Dorsolateral prefrontal cortex (tissue), 120 donors: ENCODE measurements at regions of chr2 and their contacts with region 1.

Region 1: GRCh38 chr2:218995972-218996711 is 2.9 kb upstream of the CRYBA2 start:
- DNase-seq: peak; percentile 75 to 89 (median 84)
- H3K4me3 ChIP-seq: peak overlapping the region; percentile 31 to 73 (median 54)
- H3K27ac ChIP-seq: peak overlapping the region in 14 of 59 donors; percentile 14 to 85 (median 54)
- H3K27me3 ChIP-seq: peaks cover 0 to 74% (median 44%) of the 10 kb centered on the region in 45 donors
- CTCF ChIP-seq: peak; percentile 57 to 97 (median 92)

Region 2: DNA sequence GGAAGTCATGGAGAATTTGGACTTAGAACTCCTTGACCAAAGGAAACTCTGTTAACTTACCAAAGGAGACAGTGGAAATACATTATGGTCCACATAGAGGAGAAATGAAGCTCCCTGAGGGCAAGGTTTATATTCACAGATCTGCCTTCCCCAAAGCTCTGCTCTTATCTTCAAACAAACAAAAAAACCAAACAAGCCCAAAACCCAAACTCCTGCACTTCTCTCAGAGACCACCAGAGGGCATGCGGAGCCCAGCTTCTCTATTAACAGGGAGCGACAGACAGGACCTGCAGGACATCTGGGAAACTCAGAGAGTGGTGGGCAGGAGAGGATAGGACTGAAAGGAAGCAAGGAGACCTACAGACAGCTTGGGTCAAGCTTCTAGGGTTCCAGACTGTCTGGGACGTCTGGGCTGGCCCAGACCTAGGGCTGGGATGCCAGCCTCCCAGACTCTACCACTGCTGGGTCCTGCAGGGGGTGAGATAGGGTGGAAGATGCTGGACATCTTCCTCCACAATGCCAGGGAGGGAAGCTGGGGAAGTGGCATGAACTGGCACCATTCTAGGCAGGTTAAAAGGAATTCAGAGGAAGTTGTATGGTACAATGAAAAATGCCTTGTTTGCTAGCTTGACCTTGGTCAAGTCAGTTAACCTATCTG is 119.5 kb before region 1 on chr2:
- intact Hi-C with region 1: loop called in 1 of 2 experiments (anchors 5 kb)
- DNase-seq: peak in 9 of 10 donors; percentile 51 to 85 (median 69)
- H3K4me3 ChIP-seq: no peak overlapping the region
- H3K27ac ChIP-seq: no peak overlapping the region
- H3K27me3 ChIP-seq: peaks cover 0 to 89% (median 61%) of the 10 kb centered on the region in 45 donors
- CTCF ChIP-seq: peak; percentile 83 to 99 (median 94)

Region 3: DNA sequence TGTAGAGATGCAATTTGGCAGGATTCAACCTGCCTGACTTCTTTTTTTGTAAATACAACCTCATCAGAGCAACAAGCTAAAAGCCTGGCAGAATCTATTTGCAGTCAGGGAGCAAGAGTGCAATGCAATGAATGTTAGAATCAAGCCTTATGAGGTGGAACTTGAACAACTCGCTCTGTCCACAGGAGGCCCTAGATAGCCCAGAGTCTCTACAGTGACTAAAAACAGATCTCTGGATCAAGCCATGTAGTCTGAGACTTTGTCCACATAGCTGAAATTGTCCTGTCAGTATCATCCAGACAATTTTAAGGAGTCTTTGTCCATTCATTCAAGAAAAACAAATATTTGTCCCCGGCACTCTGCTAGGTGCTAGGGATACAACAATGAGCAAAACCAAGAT is 68.7 kb before region 1 on chr2:
- intact Hi-C with region 1: no loop called
- DNase-seq: no peak
- H3K4me3 ChIP-seq: no peak overlapping the region
- H3K27ac ChIP-seq: no peak overlapping the region
- H3K27me3 ChIP-seq: peaks cover 0 to 16% (median 0%) of the 10 kb centered on the region in 45 donors
- CTCF ChIP-seq: no peak

Region 4: DNA sequence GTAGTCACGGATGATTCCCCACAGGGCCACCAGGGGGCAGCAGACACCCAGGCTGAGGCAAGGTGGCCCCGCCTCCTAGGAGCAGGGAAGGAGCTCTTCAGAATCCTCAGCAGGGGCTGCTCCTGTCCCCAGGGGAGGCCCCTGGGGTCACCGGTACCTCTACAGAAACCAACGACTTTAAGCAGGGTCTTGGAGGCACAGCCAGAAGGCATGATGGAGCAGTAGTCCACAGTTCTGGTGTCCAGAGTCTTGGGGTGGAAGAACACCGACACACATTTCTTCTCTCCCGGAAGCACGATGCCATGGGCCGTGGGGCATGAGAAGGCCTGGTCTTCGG is 33.7 kb after region 1 on chr2:
- intact Hi-C with region 1: loop called (anchors 2 kb)
- DNase-seq: peak; percentile 81 to 92 (median 86)
- H3K4me3 ChIP-seq: no peak overlapping the region
- H3K27ac ChIP-seq: peak overlapping the region in 2 of 59 donors; percentile 36 to 47
- H3K27me3 ChIP-seq: peaks cover 0 to 5% (median 0%) of the 10 kb centered on the region in 45 donors
- CTCF ChIP-seq: peak; percentile 75 to 100 (median 97)

Region 5: GRCh38 chr2:219057709-219058540 is 61.8 kb after region 1 on chr2:
- intact Hi-C with region 1: loop called in 1 of 2 experiments (anchors 1 kb)
- DNase-seq: peak; percentile 59 to 87 (median 74)
- H3K4me3 ChIP-seq: peak overlapping the region in 55 of 59 donors; percentile 6 to 62 (median 45)
- H3K27ac ChIP-seq: no peak overlapping the region
- H3K27me3 ChIP-seq: peaks cover 11 to 78% (median 62%) of the 10 kb centered on the region in 45 donors
- CTCF ChIP-seq: peak; percentile 48 to 98 (median 92)

Region 6: DNA sequence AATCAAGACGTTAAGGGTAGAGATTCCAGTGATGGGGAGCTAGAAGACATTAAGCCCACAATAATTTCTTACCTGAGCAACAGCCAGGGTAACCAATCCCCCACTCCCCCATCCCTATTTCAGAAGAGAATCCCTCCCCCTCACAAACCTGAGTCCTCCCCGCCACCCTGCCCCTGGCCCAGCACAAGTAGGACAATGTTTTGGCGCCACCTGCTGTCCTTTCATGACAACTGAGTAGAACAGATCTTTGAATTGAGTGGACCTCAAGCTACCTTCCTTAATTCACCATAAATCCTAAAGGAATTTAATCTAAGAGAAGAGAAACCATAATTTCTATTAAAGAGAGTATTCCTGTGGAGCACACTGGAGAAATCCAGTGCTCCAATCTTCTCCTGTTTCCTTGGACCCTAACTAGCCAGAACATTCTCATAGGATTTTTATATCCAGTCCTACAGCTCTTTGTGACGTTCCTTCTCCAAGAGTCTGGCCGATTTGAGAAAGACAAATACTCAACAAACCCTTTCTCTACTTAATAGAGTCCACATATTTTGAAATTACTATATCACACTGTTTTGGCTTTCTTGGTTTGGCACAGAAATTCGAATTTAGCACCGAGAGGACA is 123.4 kb after region 1 on chr2:
- intact Hi-C with region 1: loop called (anchors 1 to 5 kb)
- DNase-seq: peak in 9 of 10 donors; percentile 47 to 83 (median 67)
- H3K4me3 ChIP-seq: no peak overlapping the region
- H3K27ac ChIP-seq: no peak overlapping the region
- H3K27me3 ChIP-seq: no peaks in the 10 kb centered on the region
- CTCF ChIP-seq: peak; percentile 32 to 90 (median 77)

Region 7: DNA sequence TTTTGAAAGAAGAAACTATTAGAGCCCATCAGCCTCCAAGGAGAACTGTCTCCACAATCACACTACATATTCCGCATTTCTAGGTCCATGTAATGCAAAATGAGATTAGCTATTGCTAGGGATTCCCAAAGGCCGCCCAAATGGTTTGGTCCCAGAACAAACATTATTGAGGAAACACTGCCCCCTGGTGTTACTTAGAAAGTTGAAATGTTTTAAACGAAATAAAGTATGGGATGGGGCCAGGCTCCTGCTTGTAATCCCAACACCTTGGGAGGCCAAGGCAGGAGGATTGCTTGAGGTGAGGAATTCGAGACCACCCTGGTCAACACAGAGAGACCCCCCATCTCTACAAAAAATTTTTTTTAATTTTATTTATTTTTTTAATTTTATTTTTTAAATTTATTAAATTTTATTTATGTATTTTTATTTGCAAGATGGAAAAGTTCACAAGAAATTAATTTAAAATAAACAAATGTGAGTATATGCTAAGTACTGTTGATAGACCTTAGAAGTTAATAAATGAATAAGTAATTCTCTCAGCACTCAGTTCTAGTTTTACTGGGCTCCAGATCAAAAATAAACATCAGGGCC is 159.0 kb after region 1 on chr2:
- intact Hi-C with region 1: loop called (anchors 1 to 5 kb)
- DNase-seq: peak in 2 of 10 donors; percentile 36 to 39
- H3K4me3 ChIP-seq: no peak overlapping the region
- H3K27ac ChIP-seq: no peak overlapping the region
- H3K27me3 ChIP-seq: no peaks in the 10 kb centered on the region
- CTCF ChIP-seq: peak; percentile 60 to 93 (median 78)

Region 8: GRCh38 chr2:219160186-219161017 is 164.3 kb after region 1 on chr2 and contains the start of gene NHEJ1:
- intact Hi-C with region 1: loop called (anchors 1 to 5 kb)
- DNase-seq: peak; percentile 93 to 97 (median 96)
- H3K4me3 ChIP-seq: peak within 1 kb of the TSS; percentile 56 to 97 (median 75)
- H3K27ac ChIP-seq: peak within 1 kb of the TSS; percentile 86 to 99 (median 96)
- H3K27me3 ChIP-seq: no peaks in the 10 kb centered on the region
- CTCF ChIP-seq: peak; percentile 91 to 100 (median 99)
- total RNA-seq, gene NHEJ1: 5.8 to 16.8 (median 10.2) TPM